PC-9 (cell line): ENCODE measurements at regions of chr13 and their contacts with region 1.

Region 1: DNA sequence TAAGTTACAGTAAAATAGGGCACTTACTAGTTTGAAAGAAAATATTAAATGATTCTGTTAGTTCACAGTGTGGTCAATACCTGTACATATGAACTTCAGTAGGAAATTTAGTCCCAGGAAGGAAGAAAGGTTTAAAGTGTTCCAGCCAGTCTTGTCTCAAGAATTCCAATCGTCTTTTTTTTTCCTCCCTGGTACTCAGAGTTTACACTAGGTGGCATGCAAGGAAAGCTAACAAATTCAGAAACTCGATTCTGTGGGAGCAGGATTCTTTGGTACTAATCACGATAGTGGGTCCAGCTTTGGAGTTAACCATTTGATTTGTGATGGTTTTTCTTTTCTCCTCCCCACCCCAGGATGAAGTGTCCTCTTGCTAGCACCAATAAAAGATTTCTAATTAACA is 43.6 kb downstream of the POLR1D start:
- DNase-seq: no peak
- H3K4me3 ChIP-seq: no peak overlapping the region
- H3K27ac ChIP-seq: no peak overlapping the region
- H3K4me1 ChIP-seq: no peaks in the 10 kb centered on the region
- H3K27me3 ChIP-seq: no peaks in the 10 kb centered on the region
- CTCF ChIP-seq: no peak

Region 2: DNA sequence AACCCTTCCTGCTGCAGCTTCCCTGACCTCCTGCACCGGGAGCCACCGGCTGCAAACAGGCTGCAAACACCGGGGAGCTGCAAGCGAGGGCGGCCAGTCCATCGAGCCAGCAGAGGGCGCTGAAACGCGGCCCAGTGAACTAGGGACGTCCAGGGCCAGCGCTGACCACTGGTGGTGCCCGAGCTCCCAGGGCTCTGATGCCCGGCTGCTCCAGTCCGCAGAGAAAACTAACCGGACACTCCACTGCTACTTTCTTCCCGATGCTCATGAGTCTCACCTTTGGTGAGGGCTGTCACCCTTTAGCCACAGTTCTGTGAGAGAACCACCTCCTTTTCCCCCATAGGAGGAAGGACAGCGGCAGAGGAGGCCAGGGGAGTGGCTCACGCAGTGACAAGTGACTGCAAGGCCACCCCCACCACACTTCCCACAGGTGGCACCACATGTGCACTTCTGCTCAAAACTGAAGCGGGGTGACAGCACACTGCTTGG is 132.1 kb before region 1 on chr13:
- CTCF ChIA-PET with region 1: no interaction called
- POLR2A ChIA-PET with region 1: no interaction called
- intact Hi-C with region 1: no loop called
- DNase-seq: peak; percentile 48 to 81
- H3K4me3 ChIP-seq: peak overlapping the region; percentile 44; the same call in 1 of the 2 replicates
- H3K27ac ChIP-seq: no peak overlapping the region
- H3K4me1 ChIP-seq: no peaks in the 10 kb centered on the region
- H3K27me3 ChIP-seq: no peaks in the 10 kb centered on the region
- CTCF ChIP-seq: peak; percentile 87

Region 3: DNA sequence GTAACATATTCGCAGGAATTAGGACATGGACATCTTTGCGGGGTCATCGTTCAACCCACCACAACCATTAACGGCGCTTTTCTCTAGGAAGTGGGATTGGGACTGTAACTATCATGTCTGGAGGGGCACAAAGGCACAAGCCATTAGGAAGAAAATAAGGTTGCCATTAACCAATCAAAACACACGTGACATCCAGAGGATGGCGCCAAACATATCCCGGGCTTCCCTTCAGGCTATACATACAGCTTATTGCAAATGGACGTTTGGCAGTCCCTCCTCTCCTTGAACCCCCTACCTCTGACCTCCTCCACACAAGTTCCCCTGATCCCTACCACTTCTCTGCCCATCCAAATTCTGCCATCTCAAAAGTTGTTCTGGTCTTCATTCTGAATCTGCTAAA is 100.3 kb after region 1 on chr13:
- CTCF ChIA-PET with region 1: no interaction called
- POLR2A ChIA-PET with region 1: interaction called, 12 read pairs
- intact Hi-C with region 1: no loop called
- DNase-seq: no peak
- H3K4me3 ChIP-seq: no peak overlapping the region
- H3K27ac ChIP-seq: no peak overlapping the region
- H3K4me1 ChIP-seq: no peaks in the 10 kb centered on the region
- H3K27me3 ChIP-seq: peaks cover 29% of the 10 kb centered on the region
- CTCF ChIP-seq: no peak